H1 (cell line): ENCODE measurements at regions of chr1 and their contacts with region 1.

Region 1: GRCh38 chr1:176559878-176560277 is 96.9 kb downstream of the PAPPA2 start:
- DNase-seq: peak; percentile 17 to 70
- H3K4me3 ChIP-seq: no peak overlapping the region
- H3K27ac ChIP-seq: no peak overlapping the region
- H3K4me1 ChIP-seq: peaks cover 0 to 4% (median 0%) of the 10 kb centered on the region in 4 experiments; a peak in 3 of 7 replicates
- H3K27me3 ChIP-seq: no peaks in the 10 kb centered on the region
- CTCF ChIP-seq: peak; percentile 56 to 92 (median 78)
- EP300 ChIP-seq: no peak
- POLR2A ChIP-seq: no peak
- RAD21 ChIP-seq: peak; percentile 97 to 98

Region 2: GRCh38 chr1:176517484-176517883 is 42.4 kb before region 1 on chr1:
- CTCF ChIA-PET with region 1: no interaction called
- POLR2A ChIA-PET with region 1: no interaction called
- DNase-seq: no peak
- H3K4me3 ChIP-seq: no peak overlapping the region
- H3K27ac ChIP-seq: no peak overlapping the region
- H3K4me1 ChIP-seq: no peaks in the 10 kb centered on the region
- H3K27me3 ChIP-seq: no peaks in the 10 kb centered on the region
- CTCF ChIP-seq: no peak
- EP300 ChIP-seq: no peak
- POLR2A ChIP-seq: no peak
- RAD21 ChIP-seq: no peak

Region 3: GRCh38 chr1:176531921-176532897 is 27.7 kb before region 1 on chr1:
- CTCF ChIA-PET with region 1: interaction called, 12 read pairs
- POLR2A ChIA-PET with region 1: no interaction called
- DNase-seq: no peak
- H3K4me3 ChIP-seq: no peak overlapping the region
- H3K27ac ChIP-seq: no peak overlapping the region
- H3K4me1 ChIP-seq: peaks cover 0 to 2% (median 0%) of the 10 kb centered on the region in 4 experiments; a peak in 3 of 7 replicates
- H3K27me3 ChIP-seq: no peaks in the 10 kb centered on the region
- CTCF ChIP-seq: no peak
- EP300 ChIP-seq: no peak
- POLR2A ChIP-seq: no peak
- RAD21 ChIP-seq: no peak

Region 4: DNA sequence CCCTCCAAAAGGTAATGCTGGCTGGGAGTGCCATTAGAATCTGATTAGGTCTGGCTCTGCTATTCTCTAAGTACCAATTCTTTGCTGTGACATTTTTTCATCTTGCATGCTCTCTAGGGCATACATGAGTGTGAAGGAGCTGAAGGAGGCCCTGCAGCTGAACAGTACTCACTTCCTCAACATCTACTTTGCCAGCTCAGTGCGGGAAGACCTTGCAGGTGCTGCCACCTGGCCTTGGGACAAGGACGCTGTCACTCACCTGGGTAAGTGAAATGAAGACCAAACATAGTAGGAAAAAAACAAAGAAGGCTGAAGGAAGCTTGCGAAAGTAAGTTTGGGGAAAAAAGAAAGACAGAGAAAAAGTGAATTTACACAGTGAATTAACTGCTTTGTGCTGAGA is 111.0 kb after region 1 on chr1:
- CTCF ChIA-PET with region 1: interaction called, 33 read pairs
- POLR2A ChIA-PET with region 1: no interaction called
- DNase-seq: no peak
- H3K4me3 ChIP-seq: no peak overlapping the region
- H3K27ac ChIP-seq: no peak overlapping the region
- H3K4me1 ChIP-seq: no peaks in the 10 kb centered on the region
- H3K27me3 ChIP-seq: no peaks in the 10 kb centered on the region
- CTCF ChIP-seq: peak; percentile 6 to 39 (median 31); a peak in 3 of 4 replicates
- EP300 ChIP-seq: no peak
- POLR2A ChIP-seq: no peak
- RAD21 ChIP-seq: peak; percentile 42 to 50

Region 5: DNA sequence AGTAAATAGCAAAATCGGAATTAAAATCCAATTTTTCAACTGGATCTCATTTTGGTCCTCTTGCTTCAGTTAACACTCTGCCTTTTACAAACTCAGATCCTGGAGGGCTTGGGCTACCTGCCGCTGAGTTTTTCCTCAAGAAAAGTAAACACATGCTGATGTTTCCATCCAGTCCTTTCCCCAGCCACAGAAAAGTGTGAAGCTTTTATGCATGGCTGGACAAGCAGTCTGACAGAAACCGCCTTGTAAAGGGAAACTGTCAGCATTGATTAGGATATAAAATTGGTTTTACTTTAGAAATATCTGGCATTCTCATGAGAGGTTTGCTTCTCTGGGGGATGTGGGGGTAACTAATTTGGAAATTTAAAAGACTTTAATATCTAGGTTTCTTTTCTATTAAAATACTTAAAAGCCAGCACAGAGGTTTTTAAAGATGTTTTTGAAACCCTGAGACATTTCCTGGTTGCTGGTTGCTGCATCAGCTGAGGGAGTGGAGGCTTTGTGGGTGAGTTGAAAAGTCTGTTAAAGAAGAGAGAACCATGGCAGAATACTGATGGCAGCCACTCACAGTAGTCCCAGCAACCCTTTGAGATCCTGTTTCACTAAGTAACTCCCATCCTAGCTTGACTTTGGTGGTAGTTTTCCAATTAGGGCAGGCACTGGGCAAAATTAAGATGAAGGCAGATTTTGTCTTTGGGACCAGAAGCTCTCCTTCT is 141.4 kb after region 1 on chr1:
- CTCF ChIA-PET with region 1: interaction called, 14 read pairs
- POLR2A ChIA-PET with region 1: no interaction called
- DNase-seq: no peak
- H3K4me3 ChIP-seq: no peak overlapping the region
- H3K27ac ChIP-seq: no peak overlapping the region
- H3K4me1 ChIP-seq: peaks cover 0 to under 1% (median 0%) of the 10 kb centered on the region in 4 experiments; a peak in 1 of 7 replicates
- H3K27me3 ChIP-seq: no peaks in the 10 kb centered on the region
- CTCF ChIP-seq: no peak
- EP300 ChIP-seq: no peak
- POLR2A ChIP-seq: no peak
- RAD21 ChIP-seq: no peak

Region 6: DNA sequence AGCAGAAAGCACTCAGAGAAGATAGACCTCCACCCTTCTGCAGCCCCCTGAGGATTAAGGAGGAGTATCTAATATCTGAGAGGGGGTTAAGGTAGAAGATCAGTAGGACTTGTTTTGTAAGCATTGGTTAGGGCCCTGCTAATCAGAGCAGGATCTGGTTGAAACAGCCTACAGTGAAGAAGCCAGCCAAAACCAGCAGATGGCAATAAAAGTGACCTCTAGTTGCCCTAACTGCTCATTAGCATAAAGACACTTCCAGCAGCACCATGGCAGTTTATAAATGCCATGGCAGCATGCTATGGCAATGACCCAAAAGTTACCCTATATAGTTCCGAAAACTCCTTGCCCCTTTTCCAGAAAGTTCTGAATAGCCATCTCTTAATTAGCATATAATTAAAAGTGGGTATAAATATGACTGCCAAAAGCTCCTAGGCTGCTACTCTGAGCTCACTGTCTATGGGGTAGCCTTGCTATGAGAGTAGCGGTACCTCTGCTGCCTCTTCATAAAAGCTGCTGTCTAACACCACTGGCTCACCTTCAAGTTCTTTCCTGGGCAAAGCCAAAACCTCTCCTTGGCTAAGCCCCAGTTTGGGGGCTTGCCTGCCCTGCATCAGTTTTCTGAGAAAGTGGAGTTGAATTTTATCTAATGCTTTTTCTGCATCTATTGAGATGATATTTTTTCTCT is 157.3 kb after region 1 on chr1:
- CTCF ChIA-PET with region 1: no interaction called
- POLR2A ChIA-PET with region 1: no interaction called
- DNase-seq: no peak
- H3K4me3 ChIP-seq: no peak overlapping the region
- H3K27ac ChIP-seq: no peak overlapping the region
- H3K4me1 ChIP-seq: no peaks in the 10 kb centered on the region
- H3K27me3 ChIP-seq: no peaks in the 10 kb centered on the region
- CTCF ChIP-seq: no peak
- EP300 ChIP-seq: no peak
- POLR2A ChIP-seq: no peak
- RAD21 ChIP-seq: peak in 1 of 2 experiments; percentile 24; a peak in 1 of 4 replicates

Region 7: DNA sequence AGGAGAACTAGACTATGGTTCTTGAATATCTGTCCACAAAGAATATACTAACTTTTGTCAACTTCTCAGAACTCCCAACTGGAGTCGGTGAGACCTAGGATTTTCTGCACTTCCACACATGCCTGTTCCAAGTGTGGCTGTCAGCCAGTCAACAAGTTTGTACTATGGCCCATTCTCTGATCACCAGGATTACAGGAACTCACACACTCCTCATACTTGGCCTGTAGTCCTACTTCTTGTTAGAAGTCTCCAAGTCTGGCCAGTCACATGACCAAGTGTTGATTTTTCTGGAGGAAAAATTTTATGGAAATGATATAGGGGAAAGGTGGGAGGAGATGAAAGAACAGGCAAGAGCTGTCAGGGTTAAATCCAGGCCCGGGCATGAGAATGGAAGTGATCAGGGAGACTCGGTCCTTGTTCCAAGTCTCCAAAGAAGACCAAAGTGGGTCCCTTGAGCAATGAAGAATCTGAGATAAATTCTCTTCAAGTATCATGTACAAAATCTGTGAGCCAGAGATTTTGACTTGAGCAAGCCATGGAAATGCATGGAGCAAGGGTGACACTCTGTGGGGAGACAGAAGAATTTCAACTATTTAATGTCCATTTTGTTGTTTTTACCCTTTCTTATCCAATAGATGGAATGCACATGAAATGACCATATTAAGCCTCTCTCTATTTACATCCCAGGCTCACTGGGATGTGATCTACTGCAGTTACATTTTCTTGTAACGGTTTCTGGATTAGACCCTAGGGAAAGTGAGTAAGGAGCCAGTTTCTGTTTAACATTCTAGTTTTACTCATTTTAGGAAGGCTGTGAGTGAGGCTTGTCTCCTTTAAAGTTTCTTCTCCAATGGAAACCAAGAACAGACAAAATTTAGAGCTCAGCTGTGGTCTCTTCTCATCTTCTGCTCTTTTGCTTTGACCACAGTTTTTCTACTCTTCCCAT is 283.7 kb after region 1 on chr1:
- CTCF ChIA-PET with region 1: interaction called, 88 read pairs
- POLR2A ChIA-PET with region 1: no interaction called
- DNase-seq: no peak
- H3K4me3 ChIP-seq: no peak overlapping the region
- H3K27ac ChIP-seq: no peak overlapping the region
- H3K4me1 ChIP-seq: no peaks in the 10 kb centered on the region
- H3K27me3 ChIP-seq: no peaks in the 10 kb centered on the region
- CTCF ChIP-seq: peak in 2 of 3 experiments; percentile 53 to 65; a peak in 3 of 4 replicates
- EP300 ChIP-seq: no peak
- POLR2A ChIP-seq: no peak
- RAD21 ChIP-seq: peak; percentile 87 to 90